Transverse colon (tissue), 4 donors: ENCODE measurements at regions of chr11 and their contacts with region 1.

Region 1: GRCh38 chr11:88543902-88544655 is 206.5 kb upstream of the CTSC start:
- DNase-seq: peak; percentile 84
- H3K4me3 ChIP-seq: no peak overlapping the region
- H3K27ac ChIP-seq: no peak overlapping the region
- H3K4me1 ChIP-seq: peaks cover 0 to 4% (median 0%) of the 10 kb centered on the region in 4 donors
- H3K27me3 ChIP-seq: no peaks in the 10 kb centered on the region
- CTCF ChIP-seq: peak; percentile 86 to 91 (median 90)
- EP300 ChIP-seq: no peak
- POLR2A ChIP-seq: no peak

Region 2: DNA sequence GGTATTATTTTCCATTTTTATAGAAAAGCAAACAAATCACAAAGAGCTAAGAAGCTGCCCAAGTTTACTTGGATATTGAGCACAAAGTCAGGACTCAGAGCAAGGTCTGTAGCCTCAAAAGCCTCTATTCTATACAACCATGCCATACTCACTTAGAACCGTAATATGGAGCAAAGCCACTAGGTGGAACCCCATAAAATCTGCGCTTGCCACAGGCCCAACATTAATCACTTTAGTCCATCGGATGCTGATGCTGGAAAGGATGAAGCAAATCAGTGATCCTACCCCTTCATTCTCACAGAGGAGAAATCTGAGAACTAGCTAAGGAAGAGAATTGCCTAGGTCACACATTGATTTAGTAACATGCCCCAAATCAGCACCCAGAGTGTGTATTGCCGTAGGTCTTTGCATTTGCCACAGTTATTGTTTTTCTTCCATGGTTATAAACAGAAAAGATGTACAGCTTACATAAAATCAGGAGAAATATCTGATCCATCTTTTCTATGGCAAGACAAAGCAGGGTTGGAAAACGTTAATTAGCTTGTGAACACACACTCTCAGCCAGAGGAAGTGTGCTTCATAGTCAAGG is 312.1 kb before region 1 on chr11:
- in situ Hi-C with region 1: loop called (anchors 25 kb)
- intact Hi-C with region 1: no loop called
- DNase-seq: no peak
- H3K4me3 ChIP-seq: no peak overlapping the region
- H3K27ac ChIP-seq: no peak overlapping the region
- H3K4me1 ChIP-seq: no peaks in the 10 kb centered on the region
- H3K27me3 ChIP-seq: no peaks in the 10 kb centered on the region
- CTCF ChIP-seq: peak; percentile 43 to 67 (median 57)
- EP300 ChIP-seq: no peak
- POLR2A ChIP-seq: no peak

Region 3: GRCh38 chr11:88523379-88524071 is 20.6 kb before region 1 on chr11:
- in situ Hi-C with region 1: no loop called
- intact Hi-C with region 1: no loop called
- DNase-seq: no peak
- H3K4me3 ChIP-seq: no peak overlapping the region
- H3K27ac ChIP-seq: no peak overlapping the region
- H3K4me1 ChIP-seq: no peaks in the 10 kb centered on the region
- H3K27me3 ChIP-seq: no peaks in the 10 kb centered on the region
- CTCF ChIP-seq: no peak
- EP300 ChIP-seq: no peak
- POLR2A ChIP-seq: no peak